ENCODE measurements at regions of chr2 and their contacts with region 1.

Region 1: DNA sequence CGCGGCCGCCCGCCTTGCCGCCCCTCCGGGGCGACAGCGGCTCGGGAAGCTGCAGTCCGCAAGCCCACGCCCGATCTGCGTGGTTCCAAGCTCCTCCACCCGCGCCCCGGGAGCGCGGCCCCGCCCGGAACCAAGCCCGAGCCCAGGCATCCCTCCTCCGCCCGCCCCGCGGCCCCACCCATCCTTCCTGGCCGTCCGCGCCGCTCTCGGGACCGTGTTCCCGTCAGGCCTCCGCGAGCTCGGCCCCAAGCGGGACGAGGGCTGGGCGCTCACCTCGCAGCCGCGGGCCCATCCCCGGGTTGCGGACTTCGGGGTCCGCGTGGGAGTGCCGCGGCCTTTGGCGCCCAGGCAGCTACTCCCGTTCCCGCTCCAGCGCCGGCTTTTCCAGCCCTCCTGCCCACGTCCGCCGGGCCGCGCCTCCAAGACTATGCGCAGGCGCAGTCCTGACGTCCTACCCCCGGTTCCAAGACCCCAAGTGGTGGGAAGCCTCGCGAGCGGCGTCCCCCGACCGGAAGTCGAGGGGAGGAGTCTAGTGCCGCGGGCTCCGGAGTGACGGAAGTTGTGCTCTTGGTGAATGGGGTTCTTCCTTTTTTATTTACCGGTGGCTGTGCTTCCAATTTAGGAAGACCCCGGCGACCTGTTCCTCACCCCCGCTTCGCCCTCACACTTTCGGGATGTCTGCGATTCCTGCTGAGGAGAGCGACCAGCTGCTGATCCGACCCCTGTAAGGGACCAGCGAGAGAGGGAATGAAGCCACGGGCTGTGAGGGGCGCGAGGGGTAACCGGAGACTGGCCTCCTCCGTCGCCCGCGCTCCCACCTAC is at the starts of genes CPSF3 and ITGB1BP1:
- DNase-seq: peak; percentile 92 to 99
- ATAC-seq: peak; percentile 86 to 94 (median 91)
- H3K4me3 ChIP-seq: peak within 1 kb of the TSS; percentile 86
- H3K4me3 Mint-ChIP-seq: no peak within 1 kb of the TSS
- H3K27ac ChIP-seq: peak within 1 kb of the TSS; percentile 84
- H3K27ac Mint-ChIP-seq: no peak within 1 kb of the TSS
- H3K4me1 ChIP-seq: peaks cover 25% of the 10 kb centered on the region
- H3K4me1 Mint-ChIP-seq: peaks cover 27 to 28% of the 10 kb centered on the region in 2 donors
- H3K27me3 ChIP-seq: no peaks in the 10 kb centered on the region
- H3K27me3 Mint-ChIP-seq: no peaks in the 10 kb centered on the region
- CTCF ChIP-seq: no peak
- total RNA-seq, gene CPSF3: 28.4 to 30.7 (median 28.7) TPM
- total RNA-seq, gene ITGB1BP1: 66.9 to 114 (median 91.7) TPM

Region 2: DNA sequence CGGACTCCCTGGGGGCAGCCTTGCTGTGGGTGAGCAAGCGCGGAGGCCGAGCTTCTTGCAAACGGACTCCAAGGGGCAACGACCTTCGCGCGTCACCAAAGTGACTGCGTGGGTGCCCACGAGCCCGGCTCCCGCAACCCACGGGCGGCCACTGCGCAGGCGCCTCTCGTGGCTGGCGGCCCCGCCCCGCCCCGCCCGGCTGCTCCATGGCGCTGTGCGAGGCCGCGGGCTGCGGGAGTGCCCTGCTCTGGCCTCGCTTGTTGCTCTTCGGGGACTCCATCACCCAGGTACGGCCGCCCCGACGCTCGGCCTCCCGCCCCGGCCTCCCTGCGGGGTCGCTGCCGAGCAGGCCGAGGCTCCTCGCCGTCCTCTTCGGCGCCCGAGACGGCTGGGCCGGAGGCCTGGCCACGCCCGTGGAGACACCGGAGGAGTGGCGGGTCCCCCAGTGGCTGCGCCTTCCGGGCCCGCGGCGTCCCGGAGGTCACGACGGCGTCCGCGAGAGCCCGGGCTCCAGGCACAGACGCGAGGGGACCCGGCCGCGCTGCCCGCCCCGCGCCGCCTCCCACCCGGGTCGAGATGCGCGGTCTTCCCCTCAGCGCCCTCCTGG is 51.2 kb after region 1 on chr2 and contains the start of gene IAH1:
- intact Hi-C with region 1: loop called (anchors 10 kb)
- DNase-seq: peak; percentile 65 to 87
- ATAC-seq: peak; percentile 82 to 91 (median 85)
- H3K4me3 ChIP-seq: peak within 1 kb of the TSS; percentile 92
- H3K4me3 Mint-ChIP-seq: peak within 1 kb of the TSS; percentile 87
- H3K27ac ChIP-seq: peak within 1 kb of the TSS; percentile 93
- H3K27ac Mint-ChIP-seq: peak within 1 kb of the TSS; percentile 81 to 82
- H3K4me1 ChIP-seq: peaks cover 27% of the 10 kb centered on the region
- H3K4me1 Mint-ChIP-seq: peaks cover 31 to 33% of the 10 kb centered on the region in 2 donors
- H3K27me3 ChIP-seq: no peaks in the 10 kb centered on the region
- H3K27me3 Mint-ChIP-seq: no peaks in the 10 kb centered on the region
- CTCF ChIP-seq: no peak
- total RNA-seq, gene IAH1: 41.4 to 51.4 (median 45.4) TPM

Measured in natural killer cell (primary cell).